ENCODE measurements at regions of chr14 and their contacts with region 1.

Region 1: GRCh38 chr14:35533357-35534207 is at the start of gene INSM2:
- DNase-seq: peak in 1 of 2 experiments; percentile 97
- H3K4me3 ChIP-seq: peak within 1 kb of the TSS; percentile 58 to 78 (median 65)
- H3K27ac ChIP-seq: no peak within 1 kb of the TSS
- H3K4me1 ChIP-seq: peaks cover 0 to 9% (median 3%) of the 10 kb centered on the region in 4 experiments; a peak in 5 of 7 replicates
- H3K27me3 ChIP-seq: peaks cover 19 to 57% (median 39%) of the 10 kb centered on the region in 4 experiments
- CTCF ChIP-seq: no peak; a peak in 1 of 4 replicates
- EP300 ChIP-seq: no peak
- POLR2A ChIP-seq: no peak
- RAD21 ChIP-seq: no peak
- total RNA-seq, gene INSM2: 0.10 TPM in 1 of 2 replicates, not detected in the other

Region 2: DNA sequence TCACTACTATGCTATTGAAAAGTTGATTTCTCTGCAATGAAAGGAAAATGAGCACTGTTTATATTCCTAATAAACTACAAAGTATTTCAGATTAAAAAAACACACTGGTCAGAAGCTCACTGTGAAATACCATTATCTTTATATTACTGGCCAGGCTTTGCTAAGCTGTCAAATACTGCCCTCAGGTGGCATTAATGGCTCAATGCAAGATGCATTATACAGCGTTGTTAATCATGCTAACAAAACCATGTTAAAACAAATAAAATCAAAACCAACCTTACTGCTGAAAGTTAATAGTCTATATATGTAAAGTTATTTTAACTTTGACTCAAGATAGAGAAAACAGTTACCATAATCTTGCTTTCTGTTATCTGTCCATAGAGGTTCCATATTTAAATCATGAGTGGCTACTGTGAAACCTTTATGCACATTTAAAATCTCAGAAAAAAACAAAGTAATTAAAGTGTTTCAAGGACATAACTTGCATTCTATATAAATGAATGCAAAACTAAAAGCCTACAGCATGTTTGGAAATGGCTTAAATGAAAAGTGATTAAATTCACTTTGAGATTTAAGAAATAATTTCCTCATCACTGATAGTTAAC is 153.9 kb after region 1 on chr14:
- CTCF ChIA-PET with region 1: interaction called, 11 read pairs
- POLR2A ChIA-PET with region 1: no interaction called
- DNase-seq: no peak
- H3K4me3 ChIP-seq: no peak overlapping the region
- H3K27ac ChIP-seq: no peak overlapping the region
- H3K4me1 ChIP-seq: no peaks in the 10 kb centered on the region
- H3K27me3 ChIP-seq: no peaks in the 10 kb centered on the region
- CTCF ChIP-seq: peak in 2 of 3 experiments; percentile 72 to 75; a peak in 3 of 4 replicates
- EP300 ChIP-seq: no peak
- POLR2A ChIP-seq: no peak
- RAD21 ChIP-seq: peak; percentile 96 to 97